H1 (cell line): ENCODE measurements at regions of chr12 and their contacts with region 1.

Region 1: GRCh38 chr12:6944381-6945186 is 762 bp downstream of the C12orf57 start:
- DNase-seq: no peak
- H3K4me3 ChIP-seq: peak overlapping the region; percentile 57 to 91 (median 83)
- H3K27ac ChIP-seq: peak overlapping the region; percentile 89
- H3K4me1 ChIP-seq: peaks cover 6 to 20% (median 14%) of the 10 kb centered on the region in 4 experiments
- H3K27me3 ChIP-seq: no peaks in the 10 kb centered on the region
- CTCF ChIP-seq: peak in 2 of 3 experiments; percentile 91 to 98; a peak in 3 of 4 replicates
- EP300 ChIP-seq: peak in 1 of 2 experiments; percentile 42; a peak in 1 of 3 replicates
- POLR2A ChIP-seq: no peak
- RAD21 ChIP-seq: peak; percentile 83 to 89

Region 2: DNA sequence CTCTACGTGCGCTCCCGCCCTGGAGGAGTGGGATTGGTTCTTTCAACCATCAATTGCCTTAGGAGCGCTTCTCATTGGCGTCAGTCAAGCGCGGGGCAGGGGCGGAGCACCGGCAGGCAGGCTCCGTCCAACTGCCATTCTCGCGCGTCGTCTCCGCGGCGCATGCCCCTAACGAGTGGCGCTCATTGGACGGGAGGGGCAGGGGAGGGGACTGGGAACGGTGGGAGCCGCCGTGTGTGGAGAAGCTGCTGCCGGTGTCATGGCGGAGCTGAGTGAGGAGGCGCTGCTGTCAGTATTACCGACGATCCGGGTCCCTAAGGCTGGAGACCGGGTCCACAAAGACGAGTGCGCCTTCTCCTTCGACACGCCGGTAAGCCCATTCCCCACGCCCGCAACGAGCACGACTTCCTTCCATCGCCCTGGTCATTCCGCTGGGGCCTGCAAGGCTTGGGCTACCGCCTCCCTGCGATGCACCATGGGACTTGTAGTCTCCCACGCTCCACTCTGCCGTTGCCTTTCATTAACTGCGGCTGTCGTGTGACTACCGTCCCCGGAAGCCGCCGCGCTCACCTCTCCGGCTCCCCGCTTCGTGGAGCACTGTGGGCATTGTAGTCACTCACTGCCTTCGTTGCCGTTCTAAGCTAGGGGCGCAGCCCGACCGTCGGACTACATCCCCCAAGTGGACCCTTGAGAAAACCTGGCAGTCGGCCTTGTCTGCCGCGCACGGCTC is 92.5 kb before region 1 on chr12 and contains the start of gene USP5:
- CTCF ChIA-PET with region 1: interaction called, 5 read pairs
- POLR2A ChIA-PET with region 1: interaction called, 29 read pairs
- DNase-seq: peak; percentile 94 to 99
- H3K4me3 ChIP-seq: peak within 1 kb of the TSS; percentile 79 to 94 (median 88)
- H3K27ac ChIP-seq: peak within 1 kb of the TSS; percentile 77; the same call in 1 of the 2 replicates
- H3K4me1 ChIP-seq: peaks cover 0 to 14% (median 3%) of the 10 kb centered on the region in 4 experiments; a peak in 5 of 7 replicates
- H3K27me3 ChIP-seq: no peaks in the 10 kb centered on the region
- CTCF ChIP-seq: no peak
- EP300 ChIP-seq: no peak
- POLR2A ChIP-seq: peak in 1 of 2 experiments; percentile 79; a peak in 2 of 3 replicates
- RAD21 ChIP-seq: no peak
- total RNA-seq, gene USP5: 148 and 159 TPM in 2 replicates

Region 3: DNA sequence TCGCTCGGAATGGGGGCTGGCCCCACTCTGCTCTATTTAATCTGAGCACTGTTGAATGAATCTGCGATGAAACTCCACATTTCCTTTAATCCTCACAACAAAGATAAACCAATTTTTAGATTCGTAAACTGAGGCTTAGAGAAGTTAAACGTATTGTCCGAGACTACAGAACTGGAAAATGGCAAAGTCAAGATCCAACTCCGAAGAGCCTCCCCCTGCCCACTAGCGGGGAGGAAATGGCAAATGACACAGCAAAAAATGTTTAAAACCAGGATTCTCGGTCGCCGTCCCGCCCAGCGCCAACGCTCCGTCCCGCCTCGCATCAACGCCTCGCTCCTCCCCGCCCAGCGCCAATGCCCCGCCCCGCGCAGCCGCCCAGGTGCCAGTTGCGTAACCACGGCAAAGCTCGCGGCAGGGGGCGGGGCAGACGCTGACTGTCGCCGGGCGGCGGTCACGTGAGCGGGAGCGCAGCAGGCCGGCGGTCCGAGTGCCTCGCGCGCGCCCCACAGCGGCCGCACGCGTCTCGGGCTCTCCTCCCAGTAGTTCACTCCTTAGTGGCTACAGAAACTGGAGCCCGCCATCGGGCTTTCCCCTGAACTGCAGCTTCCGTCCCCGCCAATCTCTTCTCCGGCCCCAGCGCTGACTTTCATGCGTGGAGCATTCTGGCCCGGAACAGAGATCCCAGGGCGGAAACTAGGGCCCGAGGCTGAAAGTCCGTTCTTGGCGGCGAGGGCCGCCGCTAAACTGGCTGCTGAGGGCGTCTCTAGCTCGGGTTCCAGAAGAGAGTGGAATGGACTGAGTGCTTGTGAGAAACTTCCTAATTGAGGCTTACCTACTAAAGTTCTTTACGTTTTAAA is 53.6 kb before region 1 on chr12:
- CTCF ChIA-PET with region 1: interaction called, 6 read pairs
- POLR2A ChIA-PET with region 1: interaction called, 20 read pairs
- DNase-seq: peak; percentile 92 to 99
- H3K4me3 ChIP-seq: peak overlapping the region; percentile 31 to 63 (median 56)
- H3K27ac ChIP-seq: peak overlapping the region; percentile 76
- H3K4me1 ChIP-seq: peaks cover 0 to 9% (median 2%) of the 10 kb centered on the region in 4 experiments; a peak in 4 of 7 replicates
- H3K27me3 ChIP-seq: no peaks in the 10 kb centered on the region
- CTCF ChIP-seq: peak; percentile 72 to 96 (median 78)
- EP300 ChIP-seq: peak in 1 of 2 experiments; percentile 61; a peak in 1 of 3 replicates
- POLR2A ChIP-seq: peak; percentile 71 to 84
- RAD21 ChIP-seq: peak; percentile 42 to 61

Region 4: DNA sequence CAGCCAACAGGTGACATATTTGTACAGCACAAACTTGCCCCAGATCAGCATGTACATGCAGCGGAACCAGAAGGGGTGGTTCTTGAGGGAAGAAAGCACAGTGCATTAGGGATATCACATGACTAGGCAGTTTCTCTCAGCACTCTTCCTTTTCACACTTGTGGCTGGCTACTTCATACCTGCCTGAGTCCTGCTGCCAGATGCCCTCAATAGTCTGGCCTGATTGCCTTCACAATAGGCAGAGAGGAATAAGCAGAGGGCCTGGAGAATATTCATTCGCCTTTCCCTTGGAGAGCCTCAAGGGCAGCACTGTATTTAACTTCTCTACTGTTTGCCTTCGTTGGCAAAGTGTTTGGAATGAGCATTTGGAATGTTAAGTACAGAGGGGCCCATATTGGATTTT is 34.0 kb after region 1 on chr12:
- CTCF ChIA-PET with region 1: interaction called, 10 read pairs
- POLR2A ChIA-PET with region 1: interaction called, 1,596 read pairs
- DNase-seq: no peak
- H3K4me3 ChIP-seq: no peak overlapping the region
- H3K27ac ChIP-seq: no peak overlapping the region
- H3K4me1 ChIP-seq: peaks cover 0 to 6% (median under 1%) of the 10 kb centered on the region in 4 experiments; a peak in 2 of 7 replicates
- H3K27me3 ChIP-seq: no peaks in the 10 kb centered on the region
- CTCF ChIP-seq: no peak
- EP300 ChIP-seq: no peak
- POLR2A ChIP-seq: peak in 1 of 2 experiments; percentile 18; a peak in 2 of 3 replicates
- RAD21 ChIP-seq: no peak

Region 5: GRCh38 chr12:7092229-7092985 is 147.8 kb after region 1 on chr12 and contains the start of gene C1R:
- CTCF ChIA-PET with region 1: interaction called, 6 read pairs
- POLR2A ChIA-PET with region 1: interaction called, 14 read pairs
- DNase-seq: peak in 1 of 2 experiments; percentile 85
- H3K4me3 ChIP-seq: peak within 1 kb of the TSS in 2 of 4 experiments; percentile 25 to 49; a peak in 2 of 8 replicates
- H3K27ac ChIP-seq: no peak within 1 kb of the TSS
- H3K4me1 ChIP-seq: peaks cover 7 to 21% (median 16%) of the 10 kb centered on the region in 4 experiments
- H3K27me3 ChIP-seq: no peaks in the 10 kb centered on the region; a peak in 1 of 7 replicates
- CTCF ChIP-seq: peak; percentile 73 to 80 (median 75)
- EP300 ChIP-seq: no peak
- POLR2A ChIP-seq: 0 out of 3 replicates have a peak, but pooled peaks of 1 of the 2 experiments have one; percentile 14
- RAD21 ChIP-seq: peak; percentile 60 to 75
- total RNA-seq, gene C1R: 6.9 and 7.7 TPM in 2 replicates

Region 6: GRCh38 chr12:7108796-7109571 is 164.4 kb after region 1 on chr12 and contains the start of gene C1RL:
- CTCF ChIA-PET with region 1: interaction called, 32 read pairs
- POLR2A ChIA-PET with region 1: interaction called, 34 read pairs
- DNase-seq: peak; percentile 53 to 99
- H3K4me3 ChIP-seq: peak within 1 kb of the TSS; percentile 63 to 80 (median 75)
- H3K27ac ChIP-seq: peak within 1 kb of the TSS; percentile 13; the same call in 1 of the 2 replicates
- H3K4me1 ChIP-seq: 0 out of 7 replicates have a peak, but pooled peaks cover 0 to 2% (median 0%) of the 10 kb centered on the region in 4 experiments
- H3K27me3 ChIP-seq: no peaks in the 10 kb centered on the region
- CTCF ChIP-seq: peak; percentile 82 to 95 (median 91)
- EP300 ChIP-seq: no peak
- POLR2A ChIP-seq: 0 out of 3 replicates have a peak, but pooled peaks of 1 of the 2 experiments have one; percentile 3
- RAD21 ChIP-seq: peak; percentile 66 to 79
- total RNA-seq, gene C1RL: 11.4 and 14.7 TPM in 2 replicates

Region 7: GRCh38 chr12:7241404-7242005 is 296.9 kb after region 1 on chr12:
- CTCF ChIA-PET with region 1: no interaction called
- POLR2A ChIA-PET with region 1: no interaction called
- DNase-seq: no peak
- H3K4me3 ChIP-seq: no peak overlapping the region
- H3K27ac ChIP-seq: no peak overlapping the region
- H3K4me1 ChIP-seq: no peaks in the 10 kb centered on the region; a peak in 1 of 7 replicates
- H3K27me3 ChIP-seq: peaks cover 0 to 1% (median 0%) of the 10 kb centered on the region in 4 experiments; a peak in 1 of 7 replicates
- CTCF ChIP-seq: no peak
- EP300 ChIP-seq: no peak
- POLR2A ChIP-seq: no peak
- RAD21 ChIP-seq: no peak